ENCODE measurements at regions of chr7 and their contacts with region 1.

Region 1: DNA sequence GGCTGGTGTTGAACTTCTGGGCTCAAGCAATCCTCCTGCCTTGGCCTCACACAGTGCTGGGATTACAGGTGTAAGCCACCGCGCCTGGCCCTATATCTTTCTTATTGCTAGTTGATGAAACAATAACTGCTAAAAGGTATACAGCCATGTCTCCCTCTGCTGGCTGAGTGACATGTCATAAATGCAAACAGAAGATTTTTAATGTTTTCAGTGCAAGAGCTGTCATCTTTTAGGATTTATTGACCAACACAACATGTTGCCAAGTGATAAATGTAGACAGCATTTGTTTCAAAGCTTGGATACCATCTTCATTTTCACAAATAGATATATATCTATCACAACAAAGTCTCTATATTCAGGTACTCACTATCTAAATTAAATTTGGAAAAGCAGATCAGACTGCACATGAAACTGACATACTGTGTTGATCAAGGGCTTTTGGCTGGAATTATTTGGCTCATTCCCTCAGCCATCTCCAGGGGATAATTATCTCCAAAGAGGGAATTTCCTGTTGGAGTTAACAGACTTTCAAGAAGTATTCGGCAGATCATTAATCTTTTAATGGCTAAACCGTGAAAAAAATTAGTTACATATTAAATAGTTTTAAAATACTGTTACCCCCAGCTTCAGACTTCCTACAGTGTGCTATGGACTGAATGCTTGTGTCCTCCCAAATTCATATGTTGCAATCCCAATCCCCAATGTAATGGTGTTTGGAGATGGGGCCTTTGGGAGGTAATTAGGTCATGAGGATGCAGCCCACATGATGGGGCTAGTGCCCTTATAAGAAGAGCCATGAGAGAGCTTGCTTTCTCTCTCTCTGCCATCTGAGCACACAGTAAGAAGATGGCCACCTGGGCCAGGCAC is 41.3 kb upstream of the SRPK2 start:
- DNase-seq: peak; percentile 15 to 65 (median 36)
- H3K4me3 ChIP-seq: no peak overlapping the region
- H3K4me3 Mint-ChIP-seq: no peak overlapping the region
- H3K27ac ChIP-seq: no peak overlapping the region
- H3K27ac Mint-ChIP-seq: peak overlapping the region in 5 of 8 donors; percentile 23 to 70 (median 46)
- H3K4me1 ChIP-seq: no peaks in the 10 kb centered on the region
- H3K4me1 Mint-ChIP-seq: peaks cover 3 to 10% (median 7%) of the 10 kb centered on the region in 3 donors
- H3K27me3 ChIP-seq: no peaks in the 10 kb centered on the region
- H3K27me3 Mint-ChIP-seq: no peaks in the 10 kb centered on the region

Region 2: DNA sequence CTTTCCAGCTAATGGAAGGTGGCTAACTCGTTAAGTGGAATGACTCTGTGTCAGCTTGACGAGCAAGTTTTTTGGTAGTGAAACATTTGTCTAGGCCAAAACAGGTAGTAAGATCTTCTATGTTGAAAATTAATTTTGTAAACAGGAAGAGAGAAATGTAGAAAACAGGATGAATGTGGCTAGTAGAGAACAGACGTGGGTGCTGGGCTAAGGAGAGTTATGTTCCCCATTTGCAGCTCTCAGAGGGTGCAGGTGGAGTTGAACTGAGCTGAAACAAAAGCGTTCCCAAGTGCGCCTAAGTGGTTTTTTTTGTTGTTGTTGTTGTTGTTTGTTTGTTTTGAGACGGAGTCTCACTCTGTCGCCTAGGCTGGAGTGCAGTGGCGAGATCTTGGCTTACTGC is 18.2 kb after region 1 on chr7:
- CTCF ChIA-PET with region 1: interaction called, 11 read pairs
- POLR2A ChIA-PET with region 1: no interaction called
- DNase-seq: peak in 1 of 5 donors; percentile 13
- H3K4me3 ChIP-seq: no peak overlapping the region
- H3K4me3 Mint-ChIP-seq: peak overlapping the region in 6 of 7 donors; percentile 61 to 89 (median 72)
- H3K27ac ChIP-seq: no peak overlapping the region
- H3K27ac Mint-ChIP-seq: peak overlapping the region; percentile 61 to 97 (median 92)
- H3K4me1 ChIP-seq: peaks cover 15% of the 10 kb centered on the region
- H3K4me1 Mint-ChIP-seq: peaks cover 36 to 67% (median 60%) of the 10 kb centered on the region in 3 donors
- H3K27me3 ChIP-seq: no peaks in the 10 kb centered on the region
- H3K27me3 Mint-ChIP-seq: no peaks in the 10 kb centered on the region

Region 3: GRCh38 chr7:105531792-105532671 is 102.1 kb after region 1 on chr7 and contains the start of gene RINT1:
- CTCF ChIA-PET with region 1: interaction called, 10 read pairs
- POLR2A ChIA-PET with region 1: interaction called, 3 read pairs
- DNase-seq: peak; percentile 76 to 89 (median 85)
- H3K4me3 ChIP-seq: peak within 1 kb of the TSS; percentile 93
- H3K4me3 Mint-ChIP-seq: peak within 1 kb of the TSS; percentile 89 to 97 (median 93)
- H3K27ac ChIP-seq: peak within 1 kb of the TSS; percentile 93
- H3K27ac Mint-ChIP-seq: peak within 1 kb of the TSS; percentile 75 to 98 (median 96)
- H3K4me1 ChIP-seq: peaks cover 18% of the 10 kb centered on the region
- H3K4me1 Mint-ChIP-seq: peaks cover 30 to 58% (median 46%) of the 10 kb centered on the region in 3 donors
- H3K27me3 ChIP-seq: no peaks in the 10 kb centered on the region
- H3K27me3 Mint-ChIP-seq: no peaks in the 10 kb centered on the region
- total RNA-seq, gene RINT1: 28.4 to 29.6 TPM